ENCODE measurements at regions of chr11 and their contacts with region 1.

Region 1: DNA sequence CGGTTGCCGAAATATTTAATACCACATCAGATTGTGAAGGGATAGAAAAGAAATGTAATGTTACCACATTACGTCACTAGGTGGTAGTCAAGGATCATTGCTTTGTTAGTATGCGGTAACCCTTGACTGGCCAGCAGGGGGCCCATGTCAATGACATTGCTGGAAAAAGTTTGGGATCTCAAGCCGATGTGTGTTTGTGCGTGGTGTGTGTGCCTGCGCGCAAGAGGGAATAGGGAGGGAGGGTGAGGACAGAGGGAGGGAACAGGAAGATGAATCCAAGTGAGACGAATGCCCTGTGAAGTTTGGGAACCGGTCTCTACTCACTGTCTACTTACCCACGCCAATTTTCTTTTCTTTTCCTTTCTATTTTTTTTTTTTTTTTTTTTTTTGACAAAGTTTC is 10.7 kb upstream of the MRGPRX2 start:
- DNase-seq: peak; percentile 67
- ATAC-seq: peak; percentile 88
- H3K4me3 Mint-ChIP-seq: no peak overlapping the region
- H3K27ac Mint-ChIP-seq: no peak overlapping the region
- H3K4me1 Mint-ChIP-seq: peaks cover 5% of the 10 kb centered on the region
- H3K27me3 Mint-ChIP-seq: peaks cover 22% of the 10 kb centered on the region

Region 2: GRCh38 chr11:19040051-19040450 is 31.2 kb before region 1 on chr11:
- CTCF ChIA-PET with region 1: no interaction called
- DNase-seq: no peak
- ATAC-seq: no peak
- H3K4me3 Mint-ChIP-seq: no peak overlapping the region
- H3K27ac Mint-ChIP-seq: no peak overlapping the region
- H3K4me1 Mint-ChIP-seq: no peaks in the 10 kb centered on the region
- H3K27me3 Mint-ChIP-seq: peaks cover 21% of the 10 kb centered on the region

Region 3: GRCh38 chr11:19055016-19055415 is 16.2 kb before region 1 on chr11:
- CTCF ChIA-PET with region 1: interaction called, 18 read pairs
- DNase-seq: no peak
- ATAC-seq: no peak
- H3K4me3 Mint-ChIP-seq: no peak overlapping the region
- H3K27ac Mint-ChIP-seq: no peak overlapping the region
- H3K4me1 Mint-ChIP-seq: peaks cover 5% of the 10 kb centered on the region
- H3K27me3 Mint-ChIP-seq: peaks cover 7% of the 10 kb centered on the region

Region 4: DNA sequence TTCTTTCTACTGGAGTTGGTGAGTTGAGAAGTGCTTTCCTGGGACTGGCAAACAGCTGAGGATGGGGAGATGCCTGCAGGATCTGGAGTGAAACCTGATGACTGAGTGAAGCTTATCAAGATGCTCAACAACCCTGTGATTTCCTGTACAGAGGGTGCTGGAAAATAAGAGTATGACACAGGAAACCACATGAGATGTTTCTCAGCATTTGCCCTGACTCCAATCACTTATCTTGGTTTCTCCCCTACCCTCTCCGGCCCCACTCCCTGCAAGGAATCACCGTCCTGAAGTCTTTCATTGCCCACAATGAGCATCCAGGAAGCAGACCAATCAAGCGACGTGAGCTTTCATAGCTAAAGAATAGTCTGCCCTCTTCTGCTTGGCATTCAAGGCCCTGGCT is 10.6 kb before region 1 on chr11 and contains the start of gene MRGPRX2:
- CTCF ChIA-PET with region 1: interaction called, 18 read pairs
- DNase-seq: no peak
- ATAC-seq: peak; percentile 61
- H3K4me3 Mint-ChIP-seq: no peak within 1 kb of the TSS
- H3K27ac Mint-ChIP-seq: no peak within 1 kb of the TSS
- H3K4me1 Mint-ChIP-seq: peaks cover 22% of the 10 kb centered on the region
- H3K27me3 Mint-ChIP-seq: peaks cover 36% of the 10 kb centered on the region
- total RNA-seq, gene MRGPRX2: not detected

Region 5: GRCh38 chr11:19087658-19088057 is 16.4 kb after region 1 on chr11:
- CTCF ChIA-PET with region 1: interaction called, 25 read pairs
- DNase-seq: no peak
- ATAC-seq: no peak
- H3K4me3 Mint-ChIP-seq: no peak overlapping the region
- H3K27ac Mint-ChIP-seq: no peak overlapping the region
- H3K4me1 Mint-ChIP-seq: no peaks in the 10 kb centered on the region
- H3K27me3 Mint-ChIP-seq: peaks cover 2% of the 10 kb centered on the region

Region 6: GRCh38 chr11:19553683-19554333 is 482.6 kb after region 1 on chr11:
- CTCF ChIA-PET with region 1: interaction called, 35 read pairs
- DNase-seq: peak; percentile 75
- ATAC-seq: peak; percentile 64
- H3K4me3 Mint-ChIP-seq: no peak overlapping the region
- H3K27ac Mint-ChIP-seq: no peak overlapping the region
- H3K4me1 Mint-ChIP-seq: no peaks in the 10 kb centered on the region
- H3K27me3 Mint-ChIP-seq: peaks cover 11% of the 10 kb centered on the region